CD4-positive, alpha-beta T cell (primary cell): ENCODE measurements at regions of chr12 and their contacts with region 1.

Region 1: GRCh38 chr12:117212563-117213190 is 22.4 kb upstream of the FBXO21 start:
- DNase-seq: peak; percentile 33 to 79 (median 51)
- ATAC-seq: peak; percentile 56
- H3K4me3 ChIP-seq: no peak overlapping the region
- H3K4me3 Mint-ChIP-seq: no peak overlapping the region
- H3K27ac ChIP-seq: no peak overlapping the region
- H3K27ac Mint-ChIP-seq: no peak overlapping the region
- H3K4me1 ChIP-seq: no peaks in the 10 kb centered on the region
- H3K4me1 Mint-ChIP-seq: no peaks in the 10 kb centered on the region
- H3K27me3 ChIP-seq: no peaks in the 10 kb centered on the region
- H3K27me3 Mint-ChIP-seq: peaks cover 41% of the 10 kb centered on the region
- CTCF ChIP-seq: peak; percentile 87

Region 2: GRCh38 chr12:117587631-117588287 is 375.1 kb after region 1 on chr12:
- CTCF ChIA-PET with region 1: interaction called, 4 read pairs
- POLR2A ChIA-PET with region 1: no interaction called
- intact Hi-C with region 1: loop called (anchors 5 kb)
- DNase-seq: peak in 12 of 14 experiments; percentile 1 to 40 (median 16)
- ATAC-seq: no peak
- H3K4me3 ChIP-seq: no peak overlapping the region
- H3K4me3 Mint-ChIP-seq: no peak overlapping the region
- H3K27ac ChIP-seq: no peak overlapping the region
- H3K27ac Mint-ChIP-seq: no peak overlapping the region
- H3K4me1 ChIP-seq: no peaks in the 10 kb centered on the region
- H3K4me1 Mint-ChIP-seq: no peaks in the 10 kb centered on the region
- H3K27me3 ChIP-seq: peaks cover 0 to 3% of the 10 kb centered on the region in 2 experiments
- H3K27me3 Mint-ChIP-seq: peaks cover 24% of the 10 kb centered on the region
- CTCF ChIP-seq: peak; percentile 52